Activated CD4-positive, alpha-beta memory T cell treated with anti-CD3 and anti-CD28 coated beads for 36 hours (primary cell): ENCODE measurements at regions of chr22 and their contacts with region 1.

Region 1: DNA sequence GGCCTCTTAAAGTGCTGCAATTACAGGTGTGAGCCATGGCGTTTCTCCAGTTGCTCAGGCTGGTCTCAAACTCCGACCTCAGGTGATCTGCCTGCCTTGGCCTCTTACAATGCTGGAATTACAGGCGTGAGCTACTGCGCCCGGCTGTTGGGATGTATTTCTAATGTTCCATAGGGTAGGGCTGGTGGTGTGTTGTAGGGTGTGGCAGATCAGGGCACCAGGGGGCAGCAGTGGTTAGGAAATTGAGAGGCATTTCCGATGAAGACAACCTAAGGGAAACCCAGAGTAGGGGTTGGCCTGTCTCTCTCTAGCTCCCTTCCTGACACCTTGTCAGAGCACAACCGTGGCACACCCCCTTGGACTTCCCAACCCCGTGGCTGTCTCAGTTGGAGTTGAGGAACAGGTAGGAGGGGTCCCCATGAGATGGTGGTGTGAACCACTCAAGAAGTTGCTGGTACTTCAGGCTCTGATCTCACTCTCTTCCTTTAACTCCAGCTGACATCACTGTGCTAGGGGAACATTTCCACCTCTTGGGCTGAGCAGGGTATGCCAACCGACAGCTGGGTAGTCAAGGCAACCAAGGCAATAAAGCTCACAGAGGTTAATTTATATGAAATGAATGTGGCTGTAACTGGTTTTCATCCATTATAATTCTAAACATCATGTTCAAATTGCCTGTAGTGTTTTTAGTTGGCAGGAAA is 33.0 kb downstream of the YWHAH start:
- DNase-seq: peak; percentile 89
- H3K4me3 Mint-ChIP-seq: no peak overlapping the region
- H3K27ac Mint-ChIP-seq: no peak overlapping the region
- H3K4me1 Mint-ChIP-seq: peaks cover 2% of the 10 kb centered on the region
- H3K27me3 Mint-ChIP-seq: peaks cover 2% of the 10 kb centered on the region

Region 2: DNA sequence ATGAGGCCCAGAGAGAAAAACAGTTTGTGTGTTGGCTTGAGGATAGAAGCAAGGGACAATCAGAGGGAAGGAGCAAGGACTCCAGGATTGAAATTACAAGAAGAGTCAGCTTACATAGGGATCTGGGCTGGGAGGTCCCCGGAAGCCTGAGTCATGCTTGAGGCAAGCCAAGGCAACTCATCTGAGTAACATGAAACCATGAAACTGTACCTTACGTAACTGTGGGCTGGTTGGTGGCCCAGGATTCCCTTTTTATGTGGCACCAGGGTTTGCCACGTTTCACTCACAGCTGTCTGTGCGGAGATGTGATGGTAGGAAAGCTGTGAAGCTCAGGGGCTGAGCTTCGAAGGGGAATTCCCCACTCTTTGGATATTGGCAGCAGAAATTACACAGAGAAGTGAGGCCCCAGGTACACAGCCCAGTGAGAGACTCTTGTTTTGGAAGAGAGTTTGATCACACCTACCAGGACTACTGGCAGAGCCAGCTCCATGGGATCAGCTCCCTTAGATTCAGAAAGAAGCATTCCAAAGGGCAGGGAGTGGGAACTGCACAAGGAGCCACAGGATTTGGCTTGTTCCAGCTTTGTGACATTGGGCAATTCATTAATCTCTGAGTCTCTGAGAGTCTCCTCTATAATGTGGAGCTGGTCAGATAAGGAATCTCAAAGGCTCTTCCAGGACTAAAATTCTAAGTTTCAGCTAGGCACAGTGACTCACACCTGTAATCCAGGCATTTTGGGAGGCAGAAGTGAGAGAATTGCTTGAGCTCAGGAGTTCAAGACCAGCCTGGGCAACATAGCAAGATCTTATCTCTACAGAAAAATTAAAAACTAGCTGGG is 73.6 kb after region 1 on chr22:
- CTCF ChIA-PET with region 1: interaction called, 18 read pairs
- POLR2A ChIA-PET with region 1: interaction called, 4 read pairs
- intact Hi-C with region 1: loop called (anchors 2 kb)
- DNase-seq: peak; percentile 94
- H3K4me3 Mint-ChIP-seq: no peak overlapping the region
- H3K27ac Mint-ChIP-seq: peak overlapping the region; percentile 26
- H3K4me1 Mint-ChIP-seq: peaks cover 20% of the 10 kb centered on the region
- H3K27me3 Mint-ChIP-seq: peaks cover 52% of the 10 kb centered on the region

Region 3: GRCh38 chr22:32080904-32081303 is 103.6 kb after region 1 on chr22:
- CTCF ChIA-PET with region 1: interaction called, 241 read pairs
- POLR2A ChIA-PET with region 1: no interaction called
- intact Hi-C with region 1: loop called (anchors 1 kb)
- DNase-seq: peak; percentile 38
- H3K4me3 Mint-ChIP-seq: no peak overlapping the region
- H3K27ac Mint-ChIP-seq: no peak overlapping the region
- H3K4me1 Mint-ChIP-seq: no peaks in the 10 kb centered on the region
- H3K27me3 Mint-ChIP-seq: peaks cover 10% of the 10 kb centered on the region

Region 4: GRCh38 chr22:32112380-32112779 is 135.1 kb after region 1 on chr22:
- CTCF ChIA-PET with region 1: no interaction called
- POLR2A ChIA-PET with region 1: no interaction called
- intact Hi-C with region 1: no loop called
- DNase-seq: no peak
- H3K4me3 Mint-ChIP-seq: no peak overlapping the region
- H3K27ac Mint-ChIP-seq: no peak overlapping the region
- H3K4me1 Mint-ChIP-seq: no peaks in the 10 kb centered on the region
- H3K27me3 Mint-ChIP-seq: peaks cover 11% of the 10 kb centered on the region

Region 5: GRCh38 chr22:32202539-32203180 is 225.4 kb after region 1 on chr22:
- CTCF ChIA-PET with region 1: interaction called, 6 read pairs
- POLR2A ChIA-PET with region 1: no interaction called
- intact Hi-C with region 1: loop called (anchors 2 kb)
- DNase-seq: peak; percentile 60
- H3K4me3 Mint-ChIP-seq: peak overlapping the region; percentile 70
- H3K27ac Mint-ChIP-seq: no peak overlapping the region
- H3K4me1 Mint-ChIP-seq: peaks cover 48% of the 10 kb centered on the region
- H3K27me3 Mint-ChIP-seq: peaks cover 6% of the 10 kb centered on the region